B cell (primary cell): ENCODE measurements at regions of chr7 and their contacts with region 1.

Region 1: GRCh38 chr7:100195222-100195621 is 17.5 kb downstream of the STAG3 start:
- DNase-seq: no peak
- ATAC-seq: no peak
- H3K4me3 ChIP-seq: no peak overlapping the region
- H3K4me3 Mint-ChIP-seq: peak overlapping the region; percentile 44
- H3K27ac ChIP-seq: peak overlapping the region; percentile 56 to 57
- H3K27ac Mint-ChIP-seq: peak overlapping the region; percentile 86
- H3K4me1 ChIP-seq: peaks cover 68 to 82% of the 10 kb centered on the region in 2 donors
- H3K4me1 Mint-ChIP-seq: peaks cover 85% of the 10 kb centered on the region
- H3K27me3 ChIP-seq: no peaks in the 10 kb centered on the region
- H3K27me3 Mint-ChIP-seq: no peaks in the 10 kb centered on the region
- CTCF ChIP-seq: no peak

Region 2: GRCh38 chr7:100081535-100082102 is 113.6 kb before region 1 on chr7 and contains the start of gene ZNF3:
- CTCF ChIA-PET with region 1: no interaction called
- POLR2A ChIA-PET with region 1: no interaction called
- intact Hi-C with region 1: no loop called
- DNase-seq: peak; percentile 99
- ATAC-seq: peak; percentile 77
- H3K4me3 ChIP-seq: peak within 1 kb of the TSS; percentile 70 to 84 (median 79)
- H3K4me3 Mint-ChIP-seq: peak within 1 kb of the TSS; percentile 86
- H3K27ac ChIP-seq: peak within 1 kb of the TSS; percentile 81 to 91
- H3K27ac Mint-ChIP-seq: peak within 1 kb of the TSS; percentile 91
- H3K4me1 ChIP-seq: peaks cover 16 to 24% of the 10 kb centered on the region in 2 donors
- H3K4me1 Mint-ChIP-seq: peaks cover 32% of the 10 kb centered on the region
- H3K27me3 ChIP-seq: no peaks in the 10 kb centered on the region
- H3K27me3 Mint-ChIP-seq: no peaks in the 10 kb centered on the region
- CTCF ChIP-seq: peak; percentile 96
- total RNA-seq, gene ZNF3: 44.8 and 48.5 TPM in 2 replicates

Region 3: GRCh38 chr7:100208911-100209408 is 13.7 kb after region 1 on chr7:
- CTCF ChIA-PET with region 1: interaction called, 93 read pairs
- POLR2A ChIA-PET with region 1: interaction called, 13 read pairs
- intact Hi-C with region 1: no loop called
- DNase-seq: peak; percentile 30
- ATAC-seq: no peak
- H3K4me3 ChIP-seq: peak overlapping the region in 1 of 5 experiments; percentile 10
- H3K4me3 Mint-ChIP-seq: peak overlapping the region; percentile 46
- H3K27ac ChIP-seq: no peak overlapping the region
- H3K27ac Mint-ChIP-seq: peak overlapping the region; percentile 85
- H3K4me1 ChIP-seq: peaks cover 42 to 50% of the 10 kb centered on the region in 2 donors
- H3K4me1 Mint-ChIP-seq: peaks cover 64% of the 10 kb centered on the region
- H3K27me3 ChIP-seq: no peaks in the 10 kb centered on the region
- H3K27me3 Mint-ChIP-seq: no peaks in the 10 kb centered on the region
- CTCF ChIP-seq: no peak